HCT116 (cell line): ENCODE measurements at regions of chr6 and their contacts with region 1.

Region 1: DNA sequence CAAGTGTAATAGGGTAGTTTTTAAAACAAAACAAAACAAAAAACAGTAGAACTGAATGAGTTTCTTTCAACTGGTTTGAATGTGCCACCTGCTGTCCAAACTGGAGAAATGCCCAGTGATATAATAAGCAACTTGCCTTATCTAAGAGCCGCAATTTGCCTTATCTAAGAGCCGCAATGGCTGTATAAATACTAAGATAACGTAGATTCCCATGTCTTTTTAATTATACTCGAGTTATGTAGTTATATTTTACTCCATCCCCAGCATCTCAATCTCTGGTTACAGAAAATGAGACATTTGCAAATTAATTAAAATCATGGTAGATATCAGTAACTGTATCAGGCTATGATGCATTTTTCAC is 67.2 kb downstream of the RPP40 start:
- DNase-seq: no peak
- ATAC-seq: peak; percentile 67; the same call in 1 of the 2 replicates
- H3K4me3 ChIP-seq: no peak overlapping the region
- H3K27ac ChIP-seq: no peak overlapping the region
- H3K4me1 ChIP-seq: peaks cover 22 to 26% of the 10 kb centered on the region in 2 experiments
- H3K27me3 ChIP-seq: no peaks in the 10 kb centered on the region
- CTCF ChIP-seq: peak; percentile 45 to 71 (median 57); a peak in 5 of 6 replicates
- POLR2A ChIP-seq: no peak
- RAD21 ChIP-seq: peak; percentile 79

Region 2: DNA sequence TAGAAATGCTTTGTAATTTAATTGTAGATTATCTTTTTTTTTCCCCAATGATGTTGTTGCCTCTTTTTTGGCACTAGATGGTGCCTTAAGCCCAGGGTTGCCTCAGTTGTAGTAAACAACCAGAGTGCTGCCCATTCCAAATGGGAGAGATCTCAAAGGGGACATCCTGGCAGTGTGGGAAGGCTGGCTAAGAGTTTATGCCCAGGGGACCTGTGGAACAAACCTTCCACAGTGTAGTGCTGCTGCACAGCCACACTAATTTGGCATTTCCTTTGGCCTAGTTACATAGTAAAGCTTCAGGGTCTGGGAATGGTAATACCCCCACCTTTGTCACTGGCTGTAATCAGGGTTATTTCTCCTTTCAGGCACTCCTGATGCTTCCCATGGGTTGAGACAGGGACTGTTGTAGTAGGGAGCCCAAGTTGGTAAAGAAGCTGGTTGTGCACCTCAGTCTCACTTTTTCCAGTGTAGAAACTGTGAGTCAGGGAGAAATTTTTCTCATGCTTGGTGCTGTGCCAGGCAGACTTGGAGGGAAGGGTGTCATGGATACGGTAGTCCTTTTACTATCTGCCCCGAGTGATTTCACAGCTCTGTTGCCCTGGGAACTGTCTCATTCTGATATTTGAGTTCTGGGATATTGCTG is 623.5 kb before region 1 on chr6:
- CTCF ChIA-PET with region 1: no interaction called
- POLR2A ChIA-PET with region 1: no interaction called
- RAD21 ChIA-PET with region 1: no interaction called
- intact Hi-C with region 1: loop called (anchors 1 kb)
- DNase-seq: peak; percentile 49
- ATAC-seq: peak; percentile 90
- H3K4me3 ChIP-seq: peak overlapping the region in 1 of 2 experiments; percentile 14; a peak in 1 of 4 replicates
- H3K27ac ChIP-seq: no peak overlapping the region
- H3K4me1 ChIP-seq: peaks cover 2 to 17% of the 10 kb centered on the region in 2 experiments; a peak in 3 of 4 replicates
- H3K27me3 ChIP-seq: no peaks in the 10 kb centered on the region
- CTCF ChIP-seq: peak; percentile 47 to 80 (median 63); a peak in 5 of 6 replicates
- POLR2A ChIP-seq: no peak
- RAD21 ChIP-seq: peak; percentile 97

Region 3: GRCh38 chr6:4460586-4461475 is 475.8 kb before region 1 on chr6:
- CTCF ChIA-PET with region 1: no interaction called
- POLR2A ChIA-PET with region 1: no interaction called
- RAD21 ChIA-PET with region 1: no interaction called
- intact Hi-C with region 1: loop called (anchors 10 kb)
- DNase-seq: no peak
- ATAC-seq: no peak
- H3K4me3 ChIP-seq: no peak overlapping the region
- H3K27ac ChIP-seq: no peak overlapping the region
- H3K4me1 ChIP-seq: peaks cover 0 to 5% of the 10 kb centered on the region in 2 experiments; a peak in 1 of 4 replicates
- H3K27me3 ChIP-seq: no peaks in the 10 kb centered on the region
- CTCF ChIP-seq: no peak
- POLR2A ChIP-seq: no peak
- RAD21 ChIP-seq: no peak

Region 4: GRCh38 chr6:4647414-4648365 is 289.0 kb before region 1 on chr6:
- CTCF ChIA-PET with region 1: no interaction called
- POLR2A ChIA-PET with region 1: no interaction called
- RAD21 ChIA-PET with region 1: no interaction called
- intact Hi-C with region 1: loop called (anchors 5 kb)
- DNase-seq: peak; percentile 74
- ATAC-seq: peak; percentile 96
- H3K4me3 ChIP-seq: peak overlapping the region; percentile 0 to 36; a peak in 2 of 4 replicates
- H3K27ac ChIP-seq: no peak overlapping the region; the same call in 1 of the 2 replicates
- H3K4me1 ChIP-seq: peaks cover 7 to 13% of the 10 kb centered on the region in 2 experiments
- H3K27me3 ChIP-seq: no peaks in the 10 kb centered on the region
- CTCF ChIP-seq: no peak
- POLR2A ChIP-seq: no peak
- RAD21 ChIP-seq: peak; percentile 19; the same call in 1 of the 2 replicates

Region 5: GRCh38 chr6:4775584-4776494 is 160.8 kb before region 1 on chr6 and contains the start of gene CDYL:
- CTCF ChIA-PET with region 1: no interaction called
- POLR2A ChIA-PET with region 1: no interaction called
- RAD21 ChIA-PET with region 1: no interaction called
- intact Hi-C with region 1: loop called (anchors 5 kb)
- DNase-seq: peak; percentile 72
- ATAC-seq: peak; percentile 87
- H3K4me3 ChIP-seq: peak within 1 kb of the TSS; percentile 67 to 73
- H3K27ac ChIP-seq: peak within 1 kb of the TSS; percentile 84
- H3K4me1 ChIP-seq: peaks cover 9 to 39% of the 10 kb centered on the region in 2 experiments; a peak in 3 of 4 replicates
- H3K27me3 ChIP-seq: no peaks in the 10 kb centered on the region
- CTCF ChIP-seq: peak in 2 of 3 experiments; percentile 6 to 22; a peak in 1 of 6 replicates
- POLR2A ChIP-seq: no peak
- RAD21 ChIP-seq: no peak
- total RNA-seq, gene CDYL: 42.6 TPM

Region 6: DNA sequence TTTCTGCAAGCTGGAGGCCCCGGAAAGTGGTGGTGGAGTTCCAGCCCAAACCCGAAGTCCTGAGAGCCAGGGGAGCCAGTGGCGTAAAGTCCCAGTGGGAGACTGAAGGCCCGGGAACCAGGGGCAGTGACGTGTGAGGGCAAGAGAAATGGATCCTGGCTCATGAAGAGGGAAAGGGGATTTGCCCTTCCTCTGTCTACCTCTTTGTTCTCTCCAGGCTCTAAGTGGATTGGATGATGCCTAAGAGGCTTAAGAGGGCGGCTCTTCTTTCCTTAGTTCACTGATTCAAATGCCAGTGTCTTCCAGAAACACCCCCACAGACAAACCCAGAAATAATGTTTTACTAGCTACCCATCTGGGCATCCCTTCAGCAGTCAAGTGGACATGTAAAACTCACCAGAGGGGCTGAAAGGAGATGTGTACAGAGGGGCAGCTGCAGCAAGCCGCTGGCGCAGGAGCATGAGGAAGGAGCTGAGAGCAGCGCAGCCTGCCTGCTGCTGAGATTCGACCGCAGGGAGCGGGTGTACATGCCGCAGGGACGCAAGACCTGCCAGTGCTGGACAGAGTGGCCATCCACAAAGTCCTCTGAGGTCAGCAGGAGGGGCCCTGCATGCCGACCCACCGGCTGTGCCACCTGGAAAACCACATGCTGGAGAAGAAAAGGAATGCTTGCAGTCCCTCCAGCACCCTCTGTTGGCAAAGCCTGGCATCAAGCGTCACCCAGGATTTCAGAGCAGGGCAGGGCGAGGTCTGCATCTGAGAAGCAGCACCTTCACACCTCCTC is 130.9 kb before region 1 on chr6:
- CTCF ChIA-PET with region 1: no interaction called
- POLR2A ChIA-PET with region 1: no interaction called
- RAD21 ChIA-PET with region 1: no interaction called
- intact Hi-C with region 1: loop called (anchors 10 kb)
- DNase-seq: peak; percentile 34
- ATAC-seq: peak; percentile 89
- H3K4me3 ChIP-seq: no peak overlapping the region
- H3K27ac ChIP-seq: no peak overlapping the region
- H3K4me1 ChIP-seq: peaks cover 0 to 20% of the 10 kb centered on the region in 2 experiments; a peak in 3 of 4 replicates
- H3K27me3 ChIP-seq: no peaks in the 10 kb centered on the region
- CTCF ChIP-seq: peak; percentile 42 to 79 (median 72); a peak in 5 of 6 replicates
- POLR2A ChIP-seq: no peak
- RAD21 ChIP-seq: peak; percentile 72

Region 7: GRCh38 chr6:5220443-5220842 is 283.8 kb after region 1 on chr6:
- CTCF ChIA-PET with region 1: no interaction called
- POLR2A ChIA-PET with region 1: no interaction called
- RAD21 ChIA-PET with region 1: no interaction called
- intact Hi-C with region 1: no loop called
- DNase-seq: no peak
- ATAC-seq: no peak
- H3K4me3 ChIP-seq: no peak overlapping the region
- H3K27ac ChIP-seq: no peak overlapping the region
- H3K4me1 ChIP-seq: no peaks in the 10 kb centered on the region
- H3K27me3 ChIP-seq: no peaks in the 10 kb centered on the region
- CTCF ChIP-seq: no peak
- POLR2A ChIP-seq: no peak
- RAD21 ChIP-seq: peak; percentile 10; the same call in 1 of the 2 replicates